Activated naive CD4-positive, alpha-beta T cell treated with anti-CD3 and anti-CD28 coated beads for 36 hours (primary cell): ENCODE measurements at regions of chr9 and their contacts with region 1.

Region 1: GRCh38 chr9:75238311-75238978 is 150.1 kb downstream of the OSTF1 start:
- DNase-seq: peak; percentile 58
- H3K4me3 Mint-ChIP-seq: no peak overlapping the region
- H3K27ac Mint-ChIP-seq: no peak overlapping the region
- H3K4me1 Mint-ChIP-seq: no peaks in the 10 kb centered on the region
- H3K27me3 Mint-ChIP-seq: no peaks in the 10 kb centered on the region

Region 2: DNA sequence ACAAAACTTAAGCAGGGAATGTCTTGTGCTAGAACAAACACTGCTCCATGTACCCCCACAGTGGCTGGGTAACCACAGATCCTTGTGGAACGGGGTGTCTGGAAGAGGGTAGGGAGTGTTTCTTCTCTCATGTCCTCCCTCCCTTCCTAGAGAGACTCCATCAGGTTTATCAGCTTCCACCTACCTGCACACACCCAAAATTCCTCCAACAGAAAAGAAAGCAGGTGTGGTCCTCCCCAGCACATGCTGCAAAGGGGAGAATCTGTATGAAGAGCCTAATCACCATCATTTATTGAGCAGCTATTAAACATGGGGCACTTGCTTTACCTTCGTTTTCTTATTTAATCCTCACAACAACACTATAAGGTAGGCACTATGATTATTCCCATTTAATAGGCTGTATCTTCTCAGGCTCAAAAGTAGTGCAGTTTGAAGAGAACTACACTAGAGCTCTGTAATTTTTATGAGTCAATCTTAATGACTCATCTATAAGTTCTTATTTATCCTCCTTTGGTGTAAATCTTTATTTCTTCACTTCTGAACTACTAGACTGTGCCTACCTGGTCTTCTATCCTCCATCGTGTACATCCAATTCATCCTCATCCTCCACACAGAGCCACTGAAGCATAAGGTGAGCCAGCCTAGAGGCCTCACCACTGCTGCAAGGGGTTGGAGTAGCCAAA is 317.4 kb before region 1 on chr9:
- CTCF ChIA-PET with region 1: no interaction called
- intact Hi-C with region 1: no loop called
- DNase-seq: no peak
- H3K4me3 Mint-ChIP-seq: no peak overlapping the region
- H3K27ac Mint-ChIP-seq: no peak overlapping the region
- H3K4me1 Mint-ChIP-seq: no peaks in the 10 kb centered on the region
- H3K27me3 Mint-ChIP-seq: no peaks in the 10 kb centered on the region

Region 3: GRCh38 chr9:74935008-74935407 is 303.4 kb before region 1 on chr9:
- CTCF ChIA-PET with region 1: no interaction called
- intact Hi-C with region 1: loop called (anchors 1 kb)
- DNase-seq: no peak
- H3K4me3 Mint-ChIP-seq: no peak overlapping the region
- H3K27ac Mint-ChIP-seq: no peak overlapping the region
- H3K4me1 Mint-ChIP-seq: no peaks in the 10 kb centered on the region
- H3K27me3 Mint-ChIP-seq: peaks cover 3% of the 10 kb centered on the region

Region 4: DNA sequence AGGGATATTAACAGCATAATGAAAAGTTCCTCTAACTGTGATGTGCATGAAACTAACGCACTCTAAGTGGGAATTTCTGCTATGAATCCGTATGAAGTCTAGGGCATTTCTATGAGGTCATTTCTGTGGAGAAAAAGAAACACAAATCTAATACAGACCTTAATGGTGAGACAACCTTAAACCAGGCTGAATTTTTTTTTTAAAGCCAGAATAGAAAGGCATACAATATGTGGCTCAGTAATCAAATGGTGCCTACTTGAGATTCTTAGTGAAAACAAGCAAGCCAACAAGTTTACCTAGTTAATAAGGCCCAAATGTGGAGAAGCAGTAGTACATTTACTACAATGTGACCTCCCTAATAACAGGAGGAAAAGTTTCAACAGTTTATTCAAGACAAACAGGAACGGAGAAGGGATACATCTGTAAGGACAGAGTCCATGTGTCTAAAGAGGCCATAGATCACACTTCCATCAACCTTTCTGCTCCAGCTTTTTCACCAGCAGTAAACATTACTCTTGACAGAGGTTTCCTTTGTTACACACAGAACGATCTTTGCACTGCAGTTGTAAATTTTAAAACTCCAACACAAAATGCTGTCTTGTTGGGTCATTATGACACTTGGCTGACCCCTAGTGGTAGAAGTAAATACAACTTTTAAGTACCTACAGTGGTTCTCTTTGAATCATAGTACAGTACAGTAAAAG is 236.6 kb before region 1 on chr9:
- CTCF ChIA-PET with region 1: no interaction called
- intact Hi-C with region 1: loop called (anchors 1 kb)
- DNase-seq: no peak
- H3K4me3 Mint-ChIP-seq: no peak overlapping the region
- H3K27ac Mint-ChIP-seq: no peak overlapping the region
- H3K4me1 Mint-ChIP-seq: no peaks in the 10 kb centered on the region
- H3K27me3 Mint-ChIP-seq: no peaks in the 10 kb centered on the region

Region 5: DNA sequence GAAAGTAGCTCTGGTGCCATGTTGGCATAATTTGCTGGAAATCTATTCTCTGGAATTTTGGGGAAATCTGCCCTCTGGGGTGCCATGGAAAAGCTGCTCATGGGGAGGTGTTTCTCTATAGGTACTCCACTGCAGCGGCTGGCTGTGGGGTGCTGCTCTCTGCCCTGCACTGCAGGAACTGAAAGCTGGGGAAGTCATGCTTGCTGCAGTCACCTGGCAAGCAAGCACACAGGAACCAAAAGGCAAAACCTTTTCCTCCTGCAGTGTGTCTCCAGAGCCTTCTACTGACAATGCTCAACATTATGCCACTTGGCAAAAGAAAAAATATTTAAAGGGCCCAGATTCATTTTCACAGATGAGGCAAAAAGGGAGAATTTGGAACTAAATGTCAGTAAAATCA is 184.6 kb before region 1 on chr9:
- CTCF ChIA-PET with region 1: no interaction called
- intact Hi-C with region 1: no loop called
- DNase-seq: no peak
- H3K4me3 Mint-ChIP-seq: no peak overlapping the region
- H3K27ac Mint-ChIP-seq: no peak overlapping the region
- H3K4me1 Mint-ChIP-seq: no peaks in the 10 kb centered on the region
- H3K27me3 Mint-ChIP-seq: no peaks in the 10 kb centered on the region

Region 6: GRCh38 chr9:75161116-75161857 is 77.2 kb before region 1 on chr9:
- CTCF ChIA-PET with region 1: no interaction called
- intact Hi-C with region 1: no loop called
- DNase-seq: no peak
- H3K4me3 Mint-ChIP-seq: no peak overlapping the region
- H3K27ac Mint-ChIP-seq: no peak overlapping the region
- H3K4me1 Mint-ChIP-seq: peaks cover 11% of the 10 kb centered on the region
- H3K27me3 Mint-ChIP-seq: no peaks in the 10 kb centered on the region

Region 7: GRCh38 chr9:75200892-75201470 is 37.5 kb before region 1 on chr9:
- CTCF ChIA-PET with region 1: interaction called, 15 read pairs
- intact Hi-C with region 1: loop called (anchors 1 kb)
- DNase-seq: no peak
- H3K4me3 Mint-ChIP-seq: no peak overlapping the region
- H3K27ac Mint-ChIP-seq: no peak overlapping the region
- H3K4me1 Mint-ChIP-seq: peaks cover 4% of the 10 kb centered on the region
- H3K27me3 Mint-ChIP-seq: no peaks in the 10 kb centered on the region